Activated CD4-positive, alpha-beta T cell treated with anti-CD3 and anti-CD28 coated beads for 36 hours (primary cell): ENCODE measurements at regions of chr2 and their contacts with region 1.

Region 1: DNA sequence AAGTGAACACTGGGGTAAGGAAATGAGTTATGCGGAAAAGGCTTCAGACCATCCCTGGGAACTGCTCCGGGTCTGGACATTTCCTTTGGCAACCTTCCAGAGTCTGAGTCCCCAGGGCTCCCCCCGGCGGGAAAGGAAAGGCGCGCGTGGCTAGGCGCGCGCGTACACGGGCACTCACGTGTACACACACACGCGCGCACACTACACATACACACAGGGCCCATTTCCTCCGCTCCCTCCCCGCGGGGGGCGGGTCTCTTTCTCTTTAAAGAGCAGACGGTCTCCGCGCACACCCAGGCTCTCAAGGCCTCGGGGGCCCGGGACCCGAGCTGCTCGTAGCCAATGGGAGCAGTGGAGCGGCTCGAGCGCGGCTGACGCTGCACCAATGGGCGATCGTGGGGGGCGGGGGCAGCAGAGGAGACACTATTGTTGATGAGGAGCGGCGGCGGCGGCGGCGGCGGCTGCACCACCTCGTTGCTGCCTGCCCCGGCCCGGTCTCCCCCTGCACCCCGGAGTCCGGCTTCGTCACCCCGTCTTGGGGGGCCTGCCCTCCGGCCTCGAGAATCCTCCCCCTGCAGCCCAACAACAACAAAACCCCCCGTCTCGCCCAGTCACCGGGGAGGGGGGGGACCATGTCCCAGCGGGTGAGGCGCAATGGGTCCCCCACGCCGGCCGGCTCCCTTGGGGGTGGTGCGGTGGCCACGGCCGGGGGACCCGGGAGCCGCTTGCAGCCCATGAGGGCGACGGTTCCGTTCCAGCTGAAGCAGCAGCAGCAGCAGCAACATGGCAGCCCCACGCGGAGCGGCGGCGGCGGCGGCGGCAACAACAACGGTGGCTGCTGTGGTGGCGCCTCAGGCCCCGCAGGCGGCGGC is at the start of gene FAM117B:
- DNase-seq: peak; percentile 99
- ATAC-seq: peak; percentile 88
- H3K4me3 Mint-ChIP-seq: peak within 1 kb of the TSS; percentile 83
- H3K27ac Mint-ChIP-seq: peak within 1 kb of the TSS; percentile 93
- H3K4me1 Mint-ChIP-seq: peaks cover 48% of the 10 kb centered on the region
- H3K27me3 Mint-ChIP-seq: no peaks in the 10 kb centered on the region
- total RNA-seq, gene FAM117B: 15.3 to 16.6 TPM

Region 2: DNA sequence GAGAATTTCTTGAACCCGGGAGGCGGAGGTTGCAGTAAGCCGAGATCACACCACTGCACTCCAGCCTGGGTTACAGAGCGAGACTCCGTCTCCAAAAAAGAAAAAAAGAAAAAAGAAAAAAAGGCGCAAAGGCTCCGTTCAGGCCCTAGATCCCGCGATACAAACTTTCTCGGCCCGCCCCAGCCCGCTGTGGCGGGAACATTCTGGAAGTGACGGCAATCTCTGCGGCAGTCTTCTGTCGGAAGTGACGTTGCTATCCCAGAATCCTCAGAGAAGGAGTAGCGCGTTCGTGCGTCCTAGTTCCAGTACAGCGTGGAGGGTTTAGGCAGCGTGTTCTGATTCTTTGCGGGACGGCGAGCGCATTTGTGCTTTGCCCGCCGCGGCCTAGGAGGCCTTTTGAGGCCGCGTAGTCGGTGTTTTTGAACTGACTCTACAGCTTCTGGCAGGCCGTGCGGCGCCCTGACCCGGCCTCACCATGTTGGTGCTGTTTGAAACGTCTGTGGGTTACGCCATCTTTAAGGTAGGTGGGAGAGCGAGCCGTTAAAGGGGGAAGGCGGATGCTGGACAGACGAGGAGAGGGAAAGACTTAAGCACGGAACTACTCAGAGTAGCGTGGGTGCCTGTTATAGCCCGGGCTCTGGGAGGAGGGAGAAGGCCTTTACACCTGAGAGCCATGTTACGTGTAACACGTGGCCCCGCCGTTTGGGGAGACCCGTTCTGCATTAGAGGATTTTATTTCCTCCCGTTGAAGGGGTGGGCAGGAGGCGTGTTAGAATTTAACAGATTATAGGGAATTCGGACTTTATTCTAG is 369.1 kb before region 1 on chr2 and contains the start of gene NOP58:
- CTCF ChIA-PET with region 1: no interaction called
- POLR2A ChIA-PET with region 1: interaction called, 12 read pairs
- intact Hi-C with region 1: loop called (anchors 2 to 10 kb)
- DNase-seq: peak; percentile 95
- ATAC-seq: peak; percentile 84
- H3K4me3 Mint-ChIP-seq: no peak within 1 kb of the TSS
- H3K27ac Mint-ChIP-seq: peak within 1 kb of the TSS; percentile 78
- H3K4me1 Mint-ChIP-seq: peaks cover 15% of the 10 kb centered on the region
- H3K27me3 Mint-ChIP-seq: no peaks in the 10 kb centered on the region
- total RNA-seq, gene NOP58: 160 to 180 TPM

Region 3: DNA sequence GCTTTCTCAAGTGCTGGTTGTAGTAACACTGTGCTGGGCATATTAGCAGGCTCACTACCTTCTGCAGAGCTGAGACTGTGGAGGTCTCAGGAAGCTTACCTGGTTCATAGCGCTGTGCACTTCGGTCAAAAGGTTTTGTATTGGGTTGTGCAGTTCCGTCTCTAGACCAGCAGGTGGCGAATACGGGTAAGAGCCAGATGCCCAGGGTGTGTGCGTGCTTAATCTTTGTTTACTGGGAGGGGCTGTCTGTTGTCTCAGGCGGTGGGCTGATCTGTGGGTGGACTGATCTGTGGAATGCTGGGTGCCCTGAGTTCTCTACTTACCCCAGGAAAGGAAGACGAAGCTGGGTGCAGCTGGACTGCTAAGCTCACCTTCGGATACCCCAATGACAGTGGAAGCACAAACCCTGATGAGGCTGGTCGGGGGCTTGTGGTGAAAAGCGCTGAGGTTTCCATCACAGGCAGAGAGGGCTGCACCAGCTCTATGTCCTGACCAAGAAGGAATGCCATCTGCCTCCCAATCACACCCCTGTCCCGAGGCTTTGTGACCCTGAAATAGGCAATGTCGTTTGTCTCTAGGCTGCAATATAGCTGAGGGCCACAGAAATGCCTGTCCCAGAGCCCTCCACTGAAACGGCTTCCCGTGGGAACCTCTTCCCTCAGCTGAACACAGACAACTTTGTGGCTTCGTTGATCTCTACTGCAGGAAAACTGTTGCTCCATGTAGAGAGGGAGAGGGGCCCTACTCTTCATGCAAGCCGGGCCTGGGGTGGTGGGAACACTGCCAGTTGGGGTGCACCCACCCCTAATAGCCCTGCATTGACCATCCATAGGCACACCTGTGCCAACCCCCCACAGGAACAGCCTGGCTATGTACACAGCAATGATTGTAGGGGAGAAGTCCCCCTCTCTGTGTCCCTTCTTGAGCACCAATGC is 45.9 kb before region 1 on chr2:
- CTCF ChIA-PET with region 1: interaction called, 9 read pairs
- POLR2A ChIA-PET with region 1: no interaction called
- intact Hi-C with region 1: loop called (anchors 1 kb)
- DNase-seq: peak; percentile 80
- ATAC-seq: peak; percentile 97
- H3K4me3 Mint-ChIP-seq: no peak overlapping the region
- H3K27ac Mint-ChIP-seq: peak overlapping the region; percentile 56
- H3K4me1 Mint-ChIP-seq: peaks cover 11% of the 10 kb centered on the region
- H3K27me3 Mint-ChIP-seq: no peaks in the 10 kb centered on the region

Region 4: GRCh38 chr2:202870431-202871299 is 235.9 kb after region 1 on chr2:
- CTCF ChIA-PET with region 1: interaction called, 5 read pairs
- POLR2A ChIA-PET with region 1: no interaction called
- intact Hi-C with region 1: loop called (anchors 1 to 10 kb)
- DNase-seq: peak; percentile 83
- ATAC-seq: peak; percentile 78
- H3K4me3 Mint-ChIP-seq: peak overlapping the region; percentile 90
- H3K27ac Mint-ChIP-seq: peak overlapping the region; percentile 80
- H3K4me1 Mint-ChIP-seq: peaks cover 11% of the 10 kb centered on the region
- H3K27me3 Mint-ChIP-seq: no peaks in the 10 kb centered on the region

Region 5: DNA sequence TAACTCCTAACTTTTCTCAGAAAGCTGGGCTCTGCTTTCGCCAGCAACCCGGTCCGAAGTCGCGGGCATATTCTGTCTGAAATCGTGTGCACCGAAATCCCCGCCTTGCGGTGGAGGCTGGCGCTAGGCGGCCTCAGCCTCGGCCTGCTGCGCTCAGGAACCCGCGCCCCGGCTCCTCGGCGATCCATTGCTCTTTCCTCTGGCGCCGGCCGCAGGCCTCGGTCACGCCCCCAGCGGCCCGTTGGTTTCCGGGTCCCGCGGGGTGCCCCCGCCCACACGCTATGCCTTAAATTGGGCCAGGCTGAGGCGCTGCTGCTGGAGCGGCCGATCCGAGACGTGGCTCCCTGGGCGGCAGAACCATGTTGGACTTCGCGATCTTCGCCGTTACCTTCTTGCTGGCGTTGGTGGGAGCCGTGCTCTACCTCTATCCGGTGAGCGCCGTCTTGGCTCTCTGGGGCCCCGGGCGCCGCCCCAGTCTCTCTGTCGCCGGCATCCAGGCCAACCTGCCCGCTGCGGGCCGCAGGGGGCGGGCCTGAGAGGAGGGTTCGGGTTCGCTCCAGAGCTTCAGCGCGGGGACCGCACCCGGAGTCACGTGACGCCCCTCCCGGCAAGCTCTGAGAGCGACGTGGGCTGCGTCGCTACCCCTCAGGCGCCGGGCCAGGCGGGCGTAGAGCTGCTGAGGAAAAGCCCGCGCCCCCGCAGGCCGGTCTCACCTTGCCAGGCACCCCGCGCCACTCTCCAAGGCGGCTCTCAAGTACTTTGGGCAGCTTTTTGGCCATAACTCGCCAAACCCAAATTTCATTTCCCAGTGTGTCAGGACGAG is 604.1 kb after region 1 on chr2 and contains the start of gene CYP20A1:
- CTCF ChIA-PET with region 1: no interaction called
- POLR2A ChIA-PET with region 1: no interaction called
- intact Hi-C with region 1: loop called in 1 of 2 experiments (anchors 1 kb)
- DNase-seq: peak; percentile 99
- ATAC-seq: peak; percentile 84
- H3K4me3 Mint-ChIP-seq: peak within 1 kb of the TSS; percentile 93
- H3K27ac Mint-ChIP-seq: peak within 1 kb of the TSS; percentile 100
- H3K4me1 Mint-ChIP-seq: peaks cover 30% of the 10 kb centered on the region
- H3K27me3 Mint-ChIP-seq: no peaks in the 10 kb centered on the region
- total RNA-seq, gene CYP20A1: 19.0 to 23.3 TPM

Region 6: GRCh38 chr2:203871371-203871983 is 1236.7 kb after region 1 on chr2:
- CTCF ChIA-PET with region 1: no interaction called
- POLR2A ChIA-PET with region 1: no interaction called
- intact Hi-C with region 1: loop called in 1 of 2 experiments (anchors 5 kb)
- DNase-seq: peak; percentile 60
- ATAC-seq: peak; percentile 47
- H3K4me3 Mint-ChIP-seq: peak overlapping the region; percentile 93
- H3K27ac Mint-ChIP-seq: peak overlapping the region; percentile 100
- H3K4me1 Mint-ChIP-seq: peaks cover 73% of the 10 kb centered on the region
- H3K27me3 Mint-ChIP-seq: no peaks in the 10 kb centered on the region